Activated B cell treated with CpG ODN at 0.5 μM for 24 hours (primary cell): ENCODE measurements at regions of chr3 and their contacts with region 1.

Region 1: DNA sequence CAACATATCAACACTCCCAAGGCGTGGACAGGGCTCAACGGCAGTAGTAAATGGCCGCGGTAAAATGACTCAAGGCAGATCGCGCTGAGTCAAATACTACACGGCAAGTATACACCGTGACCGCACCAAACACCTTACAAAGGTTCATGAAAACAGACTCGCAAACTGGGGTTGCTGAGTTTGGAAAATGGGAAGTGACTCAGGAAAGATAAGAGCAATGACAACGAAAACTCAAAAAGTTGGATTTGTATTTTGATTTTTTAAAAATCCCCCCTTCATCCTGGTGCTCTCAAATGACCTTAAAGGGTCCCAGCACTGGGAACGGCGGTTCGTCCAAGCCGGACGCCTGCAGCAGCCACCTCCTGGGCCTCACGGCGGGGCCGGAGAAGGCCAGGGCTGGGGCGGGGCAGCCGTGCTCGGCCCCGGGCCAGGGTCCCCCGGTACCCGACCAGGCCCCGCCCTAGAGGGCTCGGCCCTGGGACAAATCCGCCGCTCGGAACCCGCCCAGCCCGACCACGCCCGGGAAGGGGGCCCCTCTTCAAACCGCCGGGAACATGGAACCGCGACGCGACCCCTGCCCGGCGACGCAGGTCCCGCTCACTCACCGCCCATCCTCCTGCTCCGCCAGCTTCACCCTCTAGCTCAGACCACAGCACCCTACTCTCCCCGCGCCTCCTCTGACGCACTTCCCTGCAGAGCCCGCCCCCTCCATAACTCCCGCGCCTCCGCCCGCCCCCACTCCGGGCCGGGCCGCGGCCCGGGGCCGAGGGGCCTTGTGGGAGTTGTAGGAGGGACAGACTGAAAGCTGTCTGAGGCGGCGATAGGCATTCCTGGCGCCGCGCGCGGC is at the start of gene CLDND1:
- DNase-seq: peak; percentile 92
- ATAC-seq: peak; percentile 97
- H3K4me3 Mint-ChIP-seq: peak within 1 kb of the TSS; percentile 92
- H3K27ac Mint-ChIP-seq: peak within 1 kb of the TSS; percentile 87
- H3K4me1 Mint-ChIP-seq: peaks cover 40% of the 10 kb centered on the region
- H3K27me3 Mint-ChIP-seq: no peaks in the 10 kb centered on the region
- CTCF ChIP-seq: no peak
- total RNA-seq, gene CLDND1: 133 and 140 TPM in 2 replicates

Region 2: DNA sequence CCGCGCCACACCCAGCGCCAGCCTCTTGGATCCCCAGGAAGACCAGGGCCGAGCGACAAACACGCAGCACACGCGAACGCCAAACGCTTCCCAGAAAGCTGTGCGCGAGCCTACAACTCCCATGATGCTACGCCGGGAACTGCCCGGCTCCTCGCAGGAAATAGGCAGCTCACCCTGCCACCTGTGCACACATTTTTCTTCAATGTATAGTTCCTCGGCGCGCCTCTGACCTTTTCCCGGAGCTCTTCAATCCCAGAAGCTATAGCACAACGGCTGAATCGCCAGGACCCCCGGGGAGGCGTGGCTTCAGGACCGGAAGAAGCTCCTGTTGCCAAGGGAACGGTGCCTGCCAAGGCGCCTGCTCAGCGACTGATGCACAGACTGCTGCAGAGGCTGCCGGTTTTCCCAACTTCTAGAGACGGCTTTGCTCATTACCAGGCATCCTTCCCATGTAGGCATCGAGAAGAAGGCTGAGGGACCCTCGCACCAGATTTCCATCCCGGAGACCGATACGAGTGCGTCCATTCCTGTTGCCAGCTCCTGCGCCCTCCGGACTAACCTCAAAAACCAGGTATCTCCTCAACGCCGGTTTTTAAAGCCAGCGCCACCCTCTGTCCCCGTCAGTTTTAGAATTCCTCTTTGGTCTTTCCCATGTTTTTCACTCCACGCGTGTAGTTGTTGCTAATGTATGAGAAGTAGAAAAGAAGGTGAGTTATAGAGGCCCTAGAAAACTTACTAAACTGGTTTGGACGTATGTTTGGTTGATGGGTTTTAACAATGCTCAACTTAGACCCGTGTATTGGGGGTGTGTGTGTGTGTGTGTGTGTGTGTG is 757.8 kb before region 1 on chr3 and contains the start of gene ARL6:
- CTCF ChIA-PET with region 1: no interaction called
- POLR2A ChIA-PET with region 1: interaction called, 11 read pairs
- intact Hi-C with region 1: loop called (anchors 1 kb)
- DNase-seq: peak; percentile 65
- ATAC-seq: peak; percentile 90
- H3K4me3 Mint-ChIP-seq: peak within 1 kb of the TSS; percentile 99
- H3K27ac Mint-ChIP-seq: peak within 1 kb of the TSS; percentile 95
- H3K4me1 Mint-ChIP-seq: peaks cover 23% of the 10 kb centered on the region
- H3K27me3 Mint-ChIP-seq: no peaks in the 10 kb centered on the region
- CTCF ChIP-seq: no peak
- total RNA-seq, gene ARL6: 2.5 and 4.2 TPM in 2 replicates

Region 3: DNA sequence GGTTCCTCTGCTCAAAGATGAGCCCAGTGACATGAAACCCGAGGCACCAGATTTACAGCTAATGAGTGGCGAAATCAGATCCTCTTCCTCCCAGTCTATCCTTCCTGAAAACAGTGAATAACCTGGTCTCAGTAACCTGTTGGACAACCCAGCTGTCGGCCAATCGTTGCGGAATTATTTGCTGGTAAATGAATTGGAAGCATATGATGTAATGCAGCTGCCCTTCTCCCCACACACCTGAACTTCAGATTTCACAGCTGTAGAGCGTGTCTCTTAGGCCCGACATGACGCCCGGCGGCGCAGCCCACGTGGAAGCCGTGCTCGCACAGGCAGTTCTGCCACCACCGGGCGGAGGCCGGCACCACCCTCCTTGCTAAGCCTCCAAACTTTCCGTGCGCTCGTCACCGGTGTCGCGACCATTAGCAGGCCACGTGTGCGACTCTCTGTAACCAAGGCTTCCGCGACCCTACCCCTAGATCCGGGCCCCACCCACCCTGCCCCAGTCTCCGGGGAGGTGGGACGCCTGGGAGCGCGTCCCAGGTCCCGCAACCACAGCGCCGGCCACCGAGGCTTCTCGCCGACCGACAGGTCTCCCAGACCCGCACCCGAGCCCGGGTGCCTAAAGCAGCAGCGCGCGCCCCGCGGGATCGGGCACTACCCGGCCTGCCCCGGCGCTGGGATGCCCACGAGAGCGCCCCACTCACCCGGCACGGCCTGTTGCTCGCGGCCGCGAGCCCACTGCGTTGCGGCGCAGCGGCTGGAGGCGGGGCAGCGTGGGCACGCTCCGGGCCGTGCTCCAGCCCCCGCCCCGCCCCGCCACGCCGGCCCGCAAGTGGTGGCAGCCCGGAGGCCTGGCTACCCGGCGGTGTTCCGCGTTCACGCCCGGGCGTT is 550.5 kb before region 1 on chr3 and contains the start of gene RIOX2:
- CTCF ChIA-PET with region 1: no interaction called
- POLR2A ChIA-PET with region 1: no interaction called
- intact Hi-C with region 1: loop called (anchors 1 kb)
- DNase-seq: peak; percentile 75
- ATAC-seq: peak; percentile 93
- H3K4me3 Mint-ChIP-seq: peak within 1 kb of the TSS; percentile 89
- H3K27ac Mint-ChIP-seq: peak within 1 kb of the TSS; percentile 87
- H3K4me1 Mint-ChIP-seq: peaks cover 31% of the 10 kb centered on the region
- H3K27me3 Mint-ChIP-seq: no peaks in the 10 kb centered on the region
- CTCF ChIP-seq: no peak
- total RNA-seq, gene RIOX2: 33.7 and 34.8 TPM in 2 replicates

Region 4: GRCh38 chr3:98540346-98540745 is 17.9 kb after region 1 on chr3:
- CTCF ChIA-PET with region 1: no interaction called
- POLR2A ChIA-PET with region 1: interaction called, 26 read pairs
- intact Hi-C with region 1: loop called (anchors 1 kb)
- DNase-seq: no peak
- ATAC-seq: peak; percentile 67
- H3K4me3 Mint-ChIP-seq: no peak overlapping the region
- H3K27ac Mint-ChIP-seq: peak overlapping the region; percentile 25
- H3K4me1 Mint-ChIP-seq: peaks cover 23% of the 10 kb centered on the region
- H3K27me3 Mint-ChIP-seq: no peaks in the 10 kb centered on the region
- CTCF ChIP-seq: no peak

Region 5: GRCh38 chr3:98563661-98564281 is 41.3 kb after region 1 on chr3:
- CTCF ChIA-PET with region 1: interaction called, 3 read pairs
- POLR2A ChIA-PET with region 1: interaction called, 15 read pairs
- intact Hi-C with region 1: no loop called
- DNase-seq: no peak
- ATAC-seq: peak; percentile 60
- H3K4me3 Mint-ChIP-seq: no peak overlapping the region
- H3K27ac Mint-ChIP-seq: peak overlapping the region; percentile 54
- H3K4me1 Mint-ChIP-seq: peaks cover 42% of the 10 kb centered on the region
- H3K27me3 Mint-ChIP-seq: no peaks in the 10 kb centered on the region
- CTCF ChIP-seq: no peak

Region 6: DNA sequence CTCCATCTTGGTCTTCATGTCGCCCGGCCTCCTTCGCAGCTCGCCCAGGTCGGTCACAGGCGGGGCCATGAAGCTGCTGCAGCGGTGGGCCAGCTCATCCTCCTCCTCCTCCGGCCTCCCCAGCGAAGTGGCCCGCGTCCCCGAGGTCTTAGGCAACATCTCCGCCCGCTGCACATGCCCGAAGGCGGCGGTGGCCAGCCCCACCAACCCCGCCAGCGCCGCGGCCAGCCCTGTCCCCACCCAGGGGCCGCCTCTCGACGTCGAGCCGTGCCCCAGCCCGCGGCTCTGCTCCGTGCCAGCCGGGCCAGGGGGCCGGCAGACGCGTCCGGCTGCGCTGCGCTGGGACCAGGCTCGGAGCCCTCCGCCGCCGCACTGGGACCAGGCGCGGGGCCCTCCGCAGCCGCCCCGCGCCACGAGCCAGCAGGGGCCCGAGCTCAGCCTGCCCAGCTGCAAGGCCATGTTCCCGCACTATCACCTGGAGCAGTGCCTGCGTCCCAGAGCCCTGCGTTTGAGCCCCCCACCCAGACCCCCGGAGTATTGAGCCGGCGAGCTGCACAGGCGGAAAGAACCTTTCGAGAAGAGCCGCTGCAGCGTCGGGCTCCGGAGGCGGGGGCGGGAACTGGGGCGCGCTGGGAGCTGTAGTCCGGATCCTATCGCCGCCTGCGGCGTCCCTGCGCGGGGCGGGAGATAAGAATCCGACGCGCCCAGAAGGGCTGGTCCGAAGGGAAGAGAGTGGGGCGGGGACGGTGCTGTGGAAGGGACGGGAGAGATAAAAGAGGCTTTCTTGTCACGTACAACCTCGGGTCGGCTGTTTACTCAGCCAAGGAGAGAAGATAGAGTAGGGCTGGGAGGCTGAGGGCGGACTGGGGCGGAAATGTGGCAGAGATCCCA is 70.8 kb after region 1 on chr3 and contains the start of gene CPOX:
- CTCF ChIA-PET with region 1: interaction called, 11 read pairs
- POLR2A ChIA-PET with region 1: interaction called, 33 read pairs
- intact Hi-C with region 1: loop called (anchors 1 kb)
- DNase-seq: peak; percentile 70
- ATAC-seq: peak; percentile 95
- H3K4me3 Mint-ChIP-seq: peak within 1 kb of the TSS; percentile 97
- H3K27ac Mint-ChIP-seq: peak within 1 kb of the TSS; percentile 91
- H3K4me1 Mint-ChIP-seq: peaks cover 33% of the 10 kb centered on the region
- H3K27me3 Mint-ChIP-seq: no peaks in the 10 kb centered on the region
- CTCF ChIP-seq: no peak
- total RNA-seq, gene CPOX: 17.3 and 17.5 TPM in 2 replicates

Region 7: GRCh38 chr3:99817437-99818240 is 1295.2 kb after region 1 on chr3 and contains the start of gene CMSS1:
- CTCF ChIA-PET with region 1: no interaction called
- POLR2A ChIA-PET with region 1: no interaction called
- intact Hi-C with region 1: loop called (anchors 1 kb)
- DNase-seq: peak; percentile 96
- ATAC-seq: peak; percentile 94
- H3K4me3 Mint-ChIP-seq: peak within 1 kb of the TSS; percentile 97
- H3K27ac Mint-ChIP-seq: peak within 1 kb of the TSS; percentile 99
- H3K4me1 Mint-ChIP-seq: peaks cover 37% of the 10 kb centered on the region
- H3K27me3 Mint-ChIP-seq: no peaks in the 10 kb centered on the region
- CTCF ChIP-seq: no peak
- total RNA-seq, gene CMSS1: 37.4 and 41.1 TPM in 2 replicates